ENCODE measurements at regions of chr4 and their contacts with region 1.

Region 1: DNA sequence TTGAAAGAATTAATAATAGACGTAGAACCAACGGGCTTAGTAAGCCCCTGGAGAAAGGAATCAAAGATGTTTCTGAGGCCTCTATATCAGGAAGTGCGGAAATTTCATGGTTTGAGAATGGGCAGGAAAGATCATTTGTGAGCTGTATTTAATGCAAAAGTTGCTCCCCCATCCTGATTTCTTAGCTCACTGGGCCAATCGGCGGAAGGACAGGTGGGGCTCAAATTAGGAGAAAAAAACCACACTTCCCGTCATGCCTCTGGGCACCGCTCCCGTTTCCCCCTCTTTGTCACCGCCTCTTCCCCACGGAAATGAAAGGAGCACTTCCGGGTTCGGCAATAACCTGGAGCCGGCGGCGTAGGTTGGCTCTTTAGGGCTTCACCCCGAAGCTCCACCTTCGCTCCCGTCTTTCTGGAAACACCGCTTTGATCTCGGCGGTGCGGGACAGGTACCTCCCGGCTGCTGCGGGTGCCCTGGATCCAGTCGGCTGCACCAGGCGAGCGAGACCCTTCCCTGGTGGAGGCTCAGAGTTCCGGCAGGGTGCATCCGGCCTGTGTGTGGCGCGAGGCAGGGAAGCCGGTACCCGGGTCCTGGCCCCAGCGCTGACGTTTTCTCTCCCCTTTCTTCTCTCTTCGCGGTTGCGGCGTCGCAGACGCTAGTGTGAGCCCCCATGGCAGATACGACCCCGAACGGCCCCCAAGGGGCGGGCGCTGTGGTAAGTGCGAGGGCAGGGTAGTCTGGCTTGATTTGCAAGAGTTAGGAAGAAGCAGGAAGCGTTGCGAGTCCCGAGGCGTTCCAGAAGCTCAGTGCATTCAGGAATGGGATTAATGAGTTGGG is at the start of gene TMEM33:
- DNase-seq: peak; percentile 82 to 89
- H3K4me3 ChIP-seq: peak within 1 kb of the TSS; percentile 82 to 94
- H3K27ac ChIP-seq: peak within 1 kb of the TSS; percentile 64 to 79
- H3K4me1 ChIP-seq: peaks cover 0 to 31% (median 6%) of the 10 kb centered on the region in 4 donors
- H3K27me3 ChIP-seq: no peaks in the 10 kb centered on the region
- CTCF ChIP-seq: peak in 1 of 2 experiments; percentile 32

Region 2: DNA sequence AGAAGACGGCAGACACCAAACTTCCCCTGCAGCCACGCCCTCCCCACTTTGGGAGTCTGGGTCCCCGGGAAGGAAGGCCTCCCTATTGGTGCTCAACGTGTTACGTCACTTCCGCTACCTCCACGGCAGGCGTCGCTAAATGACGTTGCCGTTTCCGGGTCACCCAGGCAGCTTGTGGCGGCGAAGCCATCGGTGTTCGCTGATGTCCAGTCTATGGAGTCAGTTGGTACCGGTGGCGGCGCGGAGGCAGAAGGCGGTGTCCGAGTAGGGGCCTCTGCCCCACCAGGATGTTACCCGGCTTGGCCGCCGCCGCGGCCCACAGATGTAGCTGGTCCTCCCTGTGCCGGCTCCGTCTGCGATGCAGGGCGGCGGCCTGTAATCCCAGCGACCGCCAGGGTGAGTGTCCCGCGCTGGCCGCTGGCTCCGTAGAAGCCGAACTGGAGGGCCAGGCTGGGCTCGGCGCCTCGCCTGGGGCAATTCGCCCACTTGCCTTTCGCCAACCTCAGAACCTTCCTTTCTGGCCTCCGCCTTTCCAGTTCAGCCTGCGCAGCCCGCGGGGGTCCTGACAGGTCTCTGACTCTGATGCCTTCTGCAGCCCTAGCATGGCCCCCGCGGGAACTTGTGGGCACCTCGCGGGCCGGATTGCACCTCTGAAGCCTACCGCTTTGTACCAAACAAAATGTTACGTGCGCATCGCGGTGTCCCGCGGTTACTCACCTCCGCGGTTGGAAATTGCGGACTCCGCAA is 55.5 kb after region 1 on chr4 and contains the start of gene SLC30A9:
- intact Hi-C with region 1: loop called (anchors 5 kb)
- DNase-seq: peak; percentile 96 to 97
- H3K4me3 ChIP-seq: peak within 1 kb of the TSS; percentile 87 to 95
- H3K27ac ChIP-seq: peak within 1 kb of the TSS; percentile 82 to 84
- H3K4me1 ChIP-seq: peaks cover 3 to 45% (median 18%) of the 10 kb centered on the region in 4 donors
- H3K27me3 ChIP-seq: no peaks in the 10 kb centered on the region
- CTCF ChIP-seq: peak; percentile 32 to 46